ENCODE measurements at regions of chr19 and their contacts with region 1.

Region 1: DNA sequence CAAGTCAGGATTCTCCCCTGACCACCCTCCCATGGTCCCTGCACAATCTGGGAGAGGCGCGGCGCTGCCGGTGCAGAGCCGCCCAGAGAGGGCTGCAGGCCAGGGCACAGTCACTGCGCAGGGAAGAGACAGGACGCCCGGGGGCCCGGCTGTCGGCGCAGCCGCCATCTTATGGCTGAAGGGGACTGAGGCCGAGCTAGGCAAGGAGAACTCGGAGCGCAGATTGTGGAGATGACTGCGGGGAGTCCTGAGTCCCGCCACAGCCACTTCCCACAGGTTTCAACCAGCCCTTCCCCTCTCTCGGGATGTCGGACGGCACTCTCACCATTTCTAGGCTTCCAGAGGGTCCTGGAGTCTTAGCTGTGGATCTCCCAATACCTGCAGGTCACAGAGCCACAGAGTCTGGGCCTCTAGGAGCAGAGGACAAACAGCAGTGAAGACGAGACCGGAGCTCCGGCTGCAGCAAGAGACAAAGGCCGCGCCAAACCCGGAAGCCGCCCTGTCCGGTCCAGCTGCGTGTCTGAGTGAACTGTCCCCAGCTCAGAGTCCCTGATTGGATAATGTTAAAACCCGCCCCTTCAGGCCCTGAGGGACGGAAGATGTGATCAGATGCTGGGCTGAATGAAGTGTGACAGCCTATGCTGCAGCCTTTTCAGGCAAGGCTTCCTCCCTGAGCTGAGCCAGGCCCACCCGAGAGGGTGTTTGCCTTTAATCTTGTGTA is at the start of gene ZNF708:
- DNase-seq: peak; percentile 32 to 90 (median 77)
- ATAC-seq: peak; percentile 95
- H3K4me3 ChIP-seq: peak within 1 kb of the TSS; percentile 91 to 97
- H3K4me3 Mint-ChIP-seq: peak within 1 kb of the TSS; percentile 97
- H3K27ac ChIP-seq: peak within 1 kb of the TSS; percentile 94 to 99
- H3K27ac Mint-ChIP-seq: peak within 1 kb of the TSS; percentile 98
- H3K4me1 ChIP-seq: peaks cover 17% of the 10 kb centered on the region
- H3K4me1 Mint-ChIP-seq: peaks cover 44% of the 10 kb centered on the region
- H3K27me3 ChIP-seq: no peaks in the 10 kb centered on the region
- H3K27me3 Mint-ChIP-seq: no peaks in the 10 kb centered on the region
- CTCF ChIP-seq: no peak
- total RNA-seq, gene ZNF708: 23.7 to 24.7 TPM

Region 2: GRCh38 chr19:21082011-21082975 is 246.8 kb before region 1 on chr19 and contains the start of gene ZNF714:
- CTCF ChIA-PET with region 1: no interaction called
- POLR2A ChIA-PET with region 1: no interaction called
- intact Hi-C with region 1: no loop called
- DNase-seq: peak; percentile 63 to 89 (median 79)
- ATAC-seq: peak; percentile 100
- H3K4me3 ChIP-seq: peak within 1 kb of the TSS; percentile 63 to 89
- H3K4me3 Mint-ChIP-seq: peak within 1 kb of the TSS; percentile 96
- H3K27ac ChIP-seq: peak within 1 kb of the TSS; percentile 32 to 68
- H3K27ac Mint-ChIP-seq: peak within 1 kb of the TSS; percentile 88
- H3K4me1 ChIP-seq: no peaks in the 10 kb centered on the region
- H3K4me1 Mint-ChIP-seq: peaks cover 9% of the 10 kb centered on the region
- H3K27me3 ChIP-seq: no peaks in the 10 kb centered on the region
- H3K27me3 Mint-ChIP-seq: no peaks in the 10 kb centered on the region
- CTCF ChIP-seq: no peak
- total RNA-seq, gene ZNF714: 7.5 to 8.5 TPM

Region 3: DNA sequence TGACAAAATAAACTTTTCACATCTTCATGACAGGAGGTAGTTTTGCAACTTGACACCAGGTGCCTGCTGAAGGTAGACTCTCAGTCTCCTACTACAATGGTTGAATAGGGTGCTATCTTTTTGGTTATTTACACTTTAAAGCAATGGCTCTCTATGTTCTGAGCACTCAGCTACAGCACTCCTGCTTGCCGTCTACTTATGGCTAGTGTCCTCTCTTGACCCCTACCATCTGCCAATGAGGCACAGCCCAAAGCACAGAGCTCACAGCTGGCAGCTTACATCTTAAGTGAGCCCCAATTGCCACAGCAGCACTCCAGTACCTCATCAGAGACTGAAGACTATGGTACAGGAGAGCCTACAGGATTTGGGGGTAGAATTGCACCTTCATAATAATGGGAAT is 11.2 kb before region 1 on chr19:
- CTCF ChIA-PET with region 1: no interaction called
- POLR2A ChIA-PET with region 1: interaction called, 10 read pairs
- intact Hi-C with region 1: no loop called
- DNase-seq: no peak
- ATAC-seq: no peak
- H3K4me3 ChIP-seq: no peak overlapping the region
- H3K4me3 Mint-ChIP-seq: no peak overlapping the region
- H3K27ac ChIP-seq: no peak overlapping the region
- H3K27ac Mint-ChIP-seq: peak overlapping the region; percentile 30
- H3K4me1 ChIP-seq: no peaks in the 10 kb centered on the region
- H3K4me1 Mint-ChIP-seq: peaks cover 71% of the 10 kb centered on the region
- H3K27me3 ChIP-seq: no peaks in the 10 kb centered on the region
- H3K27me3 Mint-ChIP-seq: no peaks in the 10 kb centered on the region
- CTCF ChIP-seq: no peak

Region 4: GRCh38 chr19:21358768-21359451 is 29.9 kb after region 1 on chr19 and contains the start of gene ZNF738:
- CTCF ChIA-PET with region 1: interaction called, 4 read pairs
- POLR2A ChIA-PET with region 1: interaction called, 23 read pairs
- intact Hi-C with region 1: loop called (anchors 1 to 2 kb)
- DNase-seq: peak; percentile 67 to 91 (median 83)
- ATAC-seq: peak; percentile 95
- H3K4me3 ChIP-seq: peak within 1 kb of the TSS; percentile 86 to 94
- H3K4me3 Mint-ChIP-seq: peak within 1 kb of the TSS; percentile 98
- H3K27ac ChIP-seq: peak within 1 kb of the TSS; percentile 65 to 82
- H3K27ac Mint-ChIP-seq: peak within 1 kb of the TSS; percentile 92
- H3K4me1 ChIP-seq: peaks cover 7% of the 10 kb centered on the region
- H3K4me1 Mint-ChIP-seq: peaks cover 15% of the 10 kb centered on the region
- H3K27me3 ChIP-seq: no peaks in the 10 kb centered on the region
- H3K27me3 Mint-ChIP-seq: no peaks in the 10 kb centered on the region
- CTCF ChIP-seq: no peak
- total RNA-seq, gene ZNF738: 5.6 to 6.3 TPM

Measured in CD8-positive, alpha-beta T cell (primary cell).